Endothelial cell of umbilical vein (primary cell): ENCODE measurements at regions of chr21 and their contacts with region 1.

Region 1: DNA sequence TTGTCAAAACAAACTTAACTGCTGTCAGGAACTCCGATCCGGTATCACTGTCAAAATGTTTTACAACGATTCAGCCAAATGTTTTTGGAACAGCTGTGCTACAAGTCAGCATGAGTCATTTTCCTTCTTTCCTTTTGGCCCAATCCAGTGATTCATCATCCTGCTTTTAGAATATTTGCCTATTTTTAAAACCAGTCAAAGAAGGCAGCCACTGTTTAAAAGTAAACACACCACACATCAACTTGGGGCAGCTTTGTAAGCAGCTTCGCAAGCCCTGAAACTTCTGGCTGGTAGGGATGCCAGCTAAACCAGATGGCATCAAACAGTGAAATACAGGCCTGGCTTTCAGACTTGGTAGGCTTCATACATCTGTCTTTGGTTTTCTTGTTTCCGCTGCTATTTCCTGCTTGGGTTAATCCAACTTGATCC is 14.9 kb downstream of the MAP3K7CL start:
- DNase-seq: peak; percentile 96
- H3K4me3 ChIP-seq: peak overlapping the region in 1 of 3 experiments; percentile 41
- H3K27ac ChIP-seq: peak overlapping the region; percentile 97
- H3K4me1 ChIP-seq: peaks cover 35% of the 10 kb centered on the region
- H3K27me3 ChIP-seq: no peaks in the 10 kb centered on the region
- CTCF ChIP-seq: no peak
- POLR2A ChIP-seq: no peak

Region 2: DNA sequence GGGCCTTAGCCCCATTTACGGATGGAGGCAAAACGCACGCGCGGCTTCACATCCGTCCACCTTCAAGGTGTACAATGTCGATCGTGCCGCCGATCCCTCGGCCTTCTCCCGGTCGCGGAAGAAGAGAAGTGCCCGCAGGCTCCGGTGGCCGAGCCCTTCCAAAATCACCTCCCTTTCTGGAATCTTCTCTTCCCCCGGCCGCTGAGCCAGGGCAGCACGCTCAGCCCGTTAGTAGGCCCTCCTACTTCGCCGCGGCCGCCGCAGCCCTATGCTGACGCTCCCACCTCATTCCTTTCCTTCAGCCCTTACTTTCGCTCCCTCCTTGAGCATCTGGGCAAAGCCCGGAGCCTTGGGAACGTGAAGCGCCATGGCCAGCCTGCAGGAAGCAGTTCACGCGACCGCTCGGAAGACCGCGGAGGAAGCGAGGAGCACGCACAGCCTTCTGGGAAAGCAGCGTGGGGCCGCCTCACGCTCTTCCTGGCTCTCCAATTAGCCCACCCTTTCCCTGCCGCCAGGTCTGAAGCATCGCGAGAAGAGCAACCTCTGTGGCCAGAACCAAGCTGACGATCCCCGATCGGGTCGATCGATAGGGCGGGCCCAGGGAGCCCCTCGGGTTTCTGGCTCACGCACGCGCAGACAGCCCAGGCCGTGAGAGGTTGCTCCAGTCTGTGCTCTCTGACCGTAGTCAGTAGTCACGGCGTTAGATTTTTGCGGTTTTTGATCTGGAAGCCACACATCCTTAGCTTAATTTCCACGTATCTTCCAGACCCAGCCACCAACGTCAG is 72.0 kb before region 1 on chr21 and contains the start of gene CCT8:
- CTCF ChIA-PET with region 1: no interaction called
- POLR2A ChIA-PET with region 1: no interaction called
- dilution Hi-C with region 1: no loop called
- intact Hi-C with region 1: loop called (anchors 2 kb)
- DNase-seq: peak; percentile 99
- H3K4me3 ChIP-seq: peak within 1 kb of the TSS; percentile 35 to 100 (median 95)
- H3K27ac ChIP-seq: peak within 1 kb of the TSS; percentile 68
- H3K4me1 ChIP-seq: peaks cover 24% of the 10 kb centered on the region
- H3K27me3 ChIP-seq: no peaks in the 10 kb centered on the region
- CTCF ChIP-seq: no peak
- POLR2A ChIP-seq: peak; percentile 96
- total RNA-seq, gene CCT8: 212 and 213 TPM in 2 replicates

Region 3: DNA sequence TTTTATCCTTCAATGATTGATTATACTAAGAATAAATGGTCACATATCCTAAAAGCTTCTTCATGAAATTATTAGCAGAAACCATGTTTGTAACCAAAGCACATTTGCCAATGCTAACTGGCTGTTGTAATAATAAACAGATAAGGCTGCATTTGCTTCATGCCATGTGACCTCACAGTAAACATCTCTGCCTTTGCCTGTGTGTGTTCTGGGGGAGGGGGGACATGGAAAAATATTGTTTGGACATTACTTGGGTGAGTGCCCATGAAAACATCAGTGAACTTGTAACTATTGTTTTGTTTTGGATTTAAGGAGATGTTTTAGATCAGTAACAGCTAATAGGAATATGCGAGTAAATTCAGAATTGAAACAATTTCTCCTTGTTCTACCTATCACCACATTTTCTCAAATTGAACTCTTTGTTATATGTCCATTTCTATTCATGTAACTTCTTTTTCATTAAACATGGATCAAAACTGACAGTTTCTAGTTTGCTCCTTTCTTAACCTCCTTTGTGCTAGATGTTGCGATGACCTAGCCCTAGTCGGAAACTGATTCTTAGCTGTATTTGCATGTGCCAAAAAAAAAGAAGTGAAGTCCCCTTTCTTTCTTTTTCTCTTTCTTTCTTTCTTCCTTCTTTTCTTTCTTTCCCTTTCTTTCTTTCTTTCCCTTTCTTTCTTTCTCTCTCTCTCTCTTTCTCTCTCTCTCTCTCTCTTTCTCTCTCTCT is 30.2 kb after region 1 on chr21:
- CTCF ChIA-PET with region 1: interaction called, 4 read pairs
- POLR2A ChIA-PET with region 1: no interaction called
- dilution Hi-C with region 1: no loop called
- intact Hi-C with region 1: loop called (anchors 2 kb)
- DNase-seq: peak; percentile 98
- H3K4me3 ChIP-seq: peak overlapping the region in 1 of 3 experiments; percentile 10
- H3K27ac ChIP-seq: peak overlapping the region; percentile 63
- H3K4me1 ChIP-seq: peaks cover 26% of the 10 kb centered on the region
- H3K27me3 ChIP-seq: no peaks in the 10 kb centered on the region
- CTCF ChIP-seq: no peak
- POLR2A ChIP-seq: no peak

Region 4: GRCh38 chr21:29208682-29209059 is 63.3 kb after region 1 on chr21:
- CTCF ChIA-PET with region 1: no interaction called
- POLR2A ChIA-PET with region 1: no interaction called
- dilution Hi-C with region 1: no loop called
- intact Hi-C with region 1: loop called (anchors 1 kb)
- DNase-seq: peak; percentile 84
- H3K4me3 ChIP-seq: peak overlapping the region in 1 of 3 experiments; percentile 38
- H3K27ac ChIP-seq: peak overlapping the region; percentile 97
- H3K4me1 ChIP-seq: peaks cover 31% of the 10 kb centered on the region
- H3K27me3 ChIP-seq: no peaks in the 10 kb centered on the region
- CTCF ChIP-seq: no peak
- POLR2A ChIP-seq: no peak

Region 5: DNA sequence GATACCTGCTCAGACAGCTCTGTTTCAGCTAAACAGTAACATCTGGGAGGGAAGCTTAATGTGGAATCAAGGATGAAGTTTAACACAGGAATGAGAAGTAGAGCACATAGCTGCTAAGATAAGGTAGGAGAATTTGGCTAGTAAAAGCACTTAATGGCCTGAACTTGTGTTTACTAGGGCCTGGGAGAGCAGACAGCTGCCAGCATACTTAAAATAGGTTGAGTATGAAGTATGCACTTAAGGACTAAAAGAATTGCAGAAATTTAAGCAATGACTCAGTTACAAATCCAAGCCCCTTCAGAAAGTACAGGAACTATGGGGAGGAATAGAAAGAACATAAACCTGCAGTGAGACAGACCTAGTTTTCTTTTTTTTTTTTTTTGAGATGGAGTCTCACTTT is 206.3 kb after region 1 on chr21:
- CTCF ChIA-PET with region 1: interaction called, 14 read pairs
- POLR2A ChIA-PET with region 1: no interaction called
- dilution Hi-C with region 1: no loop called
- intact Hi-C with region 1: no loop called
- DNase-seq: no peak
- H3K4me3 ChIP-seq: no peak overlapping the region
- H3K27ac ChIP-seq: no peak overlapping the region
- H3K4me1 ChIP-seq: no peaks in the 10 kb centered on the region
- H3K27me3 ChIP-seq: no peaks in the 10 kb centered on the region
- CTCF ChIP-seq: no peak
- POLR2A ChIP-seq: no peak

Region 6: GRCh38 chr21:29384683-29385322 is 239.4 kb after region 1 on chr21:
- CTCF ChIA-PET with region 1: no interaction called
- POLR2A ChIA-PET with region 1: no interaction called
- dilution Hi-C with region 1: no loop called
- intact Hi-C with region 1: no loop called
- DNase-seq: no peak
- H3K4me3 ChIP-seq: no peak overlapping the region
- H3K27ac ChIP-seq: no peak overlapping the region
- H3K4me1 ChIP-seq: no peaks in the 10 kb centered on the region
- H3K27me3 ChIP-seq: no peaks in the 10 kb centered on the region
- CTCF ChIP-seq: no peak
- POLR2A ChIP-seq: no peak